ENCODE measurements at regions of chr6 and their contacts with region 1.

Region 1: GRCh38 chr6:26031595-26032339 is 55.5 kb upstream of the HFE start:
- DNase-seq: peak; percentile 84
- ATAC-seq: peak; percentile 66
- H3K4me3 Mint-ChIP-seq: peak overlapping the region; percentile 88
- H3K27ac Mint-ChIP-seq: peak overlapping the region; percentile 98
- H3K4me1 Mint-ChIP-seq: peaks cover 66% of the 10 kb centered on the region
- H3K27me3 Mint-ChIP-seq: peaks cover 3% of the 10 kb centered on the region

Region 2: DNA sequence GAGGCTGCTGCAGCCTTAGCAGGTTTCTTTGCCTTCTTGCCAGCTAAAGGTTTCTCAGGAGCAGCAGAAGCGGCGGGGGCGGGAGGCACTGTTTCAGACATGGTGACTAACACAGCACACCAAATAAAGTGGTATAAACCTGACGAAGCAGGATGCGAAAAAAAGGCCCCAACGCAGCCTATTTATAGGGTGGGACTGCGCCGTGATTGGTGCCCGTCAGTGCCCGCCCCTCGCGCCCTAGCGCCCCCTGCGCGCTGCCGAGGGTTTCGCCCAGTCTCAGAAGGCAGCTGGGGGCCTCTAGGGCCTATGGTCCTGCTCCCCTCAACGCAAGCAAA is 14.2 kb before region 1 on chr6:
- POLR2A ChIA-PET with region 1: interaction called, 1,993 read pairs
- DNase-seq: peak; percentile 84
- ATAC-seq: peak; percentile 24
- H3K4me3 Mint-ChIP-seq: peak overlapping the region; percentile 77
- H3K27ac Mint-ChIP-seq: peak overlapping the region; percentile 92
- H3K4me1 Mint-ChIP-seq: peaks cover 26% of the 10 kb centered on the region
- H3K27me3 Mint-ChIP-seq: no peaks in the 10 kb centered on the region

Region 3: DNA sequence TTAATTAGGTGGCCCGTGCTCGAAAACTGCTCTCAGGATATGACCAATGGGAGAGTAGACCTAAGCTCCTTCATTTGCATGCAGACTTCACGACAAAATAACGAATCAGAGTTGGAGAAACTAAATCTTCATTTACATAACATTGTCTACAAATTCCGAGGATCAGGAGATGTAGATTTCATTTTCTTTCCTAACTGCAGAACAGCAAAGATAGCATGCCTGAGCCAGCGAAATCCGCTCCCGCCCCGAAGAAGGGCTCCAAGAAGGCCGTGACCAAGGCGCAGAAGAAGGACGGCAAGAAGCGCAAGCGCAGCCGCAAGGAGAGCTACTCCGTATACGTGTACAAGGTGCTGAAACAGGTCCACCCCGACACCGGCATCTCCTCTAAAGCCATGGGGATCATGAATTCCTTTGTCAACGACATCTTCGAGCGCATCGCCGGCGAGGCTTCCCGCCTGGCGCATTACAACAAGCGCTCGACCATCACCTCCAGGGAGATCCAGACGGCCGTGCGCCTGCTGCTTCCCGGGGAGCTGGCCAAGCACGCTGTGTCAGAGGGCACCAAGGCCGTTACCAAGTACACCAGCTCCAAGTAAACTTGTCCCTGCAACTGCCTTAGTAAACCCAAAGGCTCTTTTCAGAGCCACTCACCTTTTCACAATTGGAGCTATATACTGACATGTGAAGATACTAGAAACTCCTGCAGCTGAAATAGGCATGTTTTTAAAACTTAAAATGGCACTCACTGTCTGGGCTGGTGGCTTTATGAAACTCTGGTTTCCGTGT is 152.0 kb after region 1 on chr6:
- POLR2A ChIA-PET with region 1: interaction called, 25 read pairs
- DNase-seq: peak; percentile 78
- ATAC-seq: peak; percentile 85
- H3K4me3 Mint-ChIP-seq: peak overlapping the region; percentile 96
- H3K27ac Mint-ChIP-seq: peak overlapping the region; percentile 99
- H3K4me1 Mint-ChIP-seq: peaks cover 48% of the 10 kb centered on the region
- H3K27me3 Mint-ChIP-seq: no peaks in the 10 kb centered on the region

Region 4: DNA sequence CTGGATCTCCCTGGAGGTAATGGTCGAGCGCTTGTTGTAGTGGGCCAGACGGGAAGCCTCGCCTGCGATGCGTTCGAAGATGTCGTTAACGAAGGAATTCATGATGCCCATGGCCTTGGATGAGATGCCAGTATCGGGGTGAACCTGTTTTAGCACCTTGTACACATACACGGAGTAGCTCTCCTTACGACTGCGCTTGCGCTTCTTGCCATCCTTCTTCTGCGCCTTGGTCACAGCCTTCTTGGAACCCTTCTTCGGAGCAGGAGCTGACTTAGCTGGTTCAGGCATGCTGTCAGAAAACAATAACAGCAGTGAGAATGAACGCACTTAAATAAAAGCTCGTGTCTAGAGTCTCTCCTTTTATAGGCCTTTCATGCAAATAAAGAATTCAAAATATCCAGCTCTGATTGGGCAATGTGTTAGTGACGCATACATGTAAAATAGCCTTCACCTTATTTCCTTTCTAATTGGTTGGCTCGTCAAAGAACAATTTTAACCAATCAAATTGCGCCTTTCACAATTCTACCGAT is 184.7 kb after region 1 on chr6:
- POLR2A ChIA-PET with region 1: interaction called, 41 read pairs
- DNase-seq: peak; percentile 77
- ATAC-seq: peak; percentile 75
- H3K4me3 Mint-ChIP-seq: no peak overlapping the region
- H3K27ac Mint-ChIP-seq: no peak overlapping the region
- H3K4me1 Mint-ChIP-seq: peaks cover 32% of the 10 kb centered on the region
- H3K27me3 Mint-ChIP-seq: no peaks in the 10 kb centered on the region

Region 5: GRCh38 chr6:27132532-27133280 is 1100.9 kb after region 1 on chr6:
- POLR2A ChIA-PET with region 1: interaction called, 22 read pairs
- DNase-seq: peak; percentile 90
- ATAC-seq: peak; percentile 76
- H3K4me3 Mint-ChIP-seq: no peak overlapping the region
- H3K27ac Mint-ChIP-seq: no peak overlapping the region
- H3K4me1 Mint-ChIP-seq: peaks cover 46% of the 10 kb centered on the region
- H3K27me3 Mint-ChIP-seq: no peaks in the 10 kb centered on the region

Region 6: DNA sequence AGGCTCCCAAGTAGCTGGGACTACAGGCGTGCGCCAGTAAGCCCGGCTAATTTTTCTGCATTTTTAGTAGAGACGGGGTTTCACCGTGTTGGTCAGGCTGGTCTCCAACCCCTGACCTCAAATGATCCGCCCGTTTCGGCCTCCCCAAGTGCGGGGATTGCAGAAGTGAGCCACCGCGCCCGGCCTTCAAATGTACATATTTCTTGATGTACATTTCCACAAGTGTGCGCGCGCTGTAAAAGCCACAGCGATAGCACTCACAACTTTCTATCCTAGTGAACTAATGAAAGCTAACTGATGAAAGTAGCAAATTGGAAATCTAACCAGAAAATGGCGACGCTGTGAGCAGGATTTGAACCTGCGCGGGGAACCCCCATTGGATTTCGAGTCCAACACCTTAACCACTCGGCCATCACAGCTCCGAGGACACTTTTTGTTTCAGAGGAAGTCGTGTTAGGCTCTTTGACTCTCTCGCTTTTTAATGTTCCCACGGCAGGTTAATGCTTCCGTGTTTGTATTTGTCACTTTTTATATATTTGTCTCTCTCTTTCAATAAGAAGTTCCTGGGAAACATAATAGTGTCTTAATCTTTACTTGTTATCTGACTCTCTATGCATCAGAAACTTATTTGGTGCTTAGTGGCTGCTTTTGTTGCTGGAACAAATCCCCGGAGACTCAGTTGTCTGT is 1640.5 kb after region 1 on chr6:
- POLR2A ChIA-PET with region 1: no interaction called
- DNase-seq: no peak
- ATAC-seq: peak; percentile 66
- H3K4me3 Mint-ChIP-seq: peak overlapping the region; percentile 66
- H3K27ac Mint-ChIP-seq: no peak overlapping the region
- H3K4me1 Mint-ChIP-seq: peaks cover 40% of the 10 kb centered on the region
- H3K27me3 Mint-ChIP-seq: peaks cover 73% of the 10 kb centered on the region

Region 7: DNA sequence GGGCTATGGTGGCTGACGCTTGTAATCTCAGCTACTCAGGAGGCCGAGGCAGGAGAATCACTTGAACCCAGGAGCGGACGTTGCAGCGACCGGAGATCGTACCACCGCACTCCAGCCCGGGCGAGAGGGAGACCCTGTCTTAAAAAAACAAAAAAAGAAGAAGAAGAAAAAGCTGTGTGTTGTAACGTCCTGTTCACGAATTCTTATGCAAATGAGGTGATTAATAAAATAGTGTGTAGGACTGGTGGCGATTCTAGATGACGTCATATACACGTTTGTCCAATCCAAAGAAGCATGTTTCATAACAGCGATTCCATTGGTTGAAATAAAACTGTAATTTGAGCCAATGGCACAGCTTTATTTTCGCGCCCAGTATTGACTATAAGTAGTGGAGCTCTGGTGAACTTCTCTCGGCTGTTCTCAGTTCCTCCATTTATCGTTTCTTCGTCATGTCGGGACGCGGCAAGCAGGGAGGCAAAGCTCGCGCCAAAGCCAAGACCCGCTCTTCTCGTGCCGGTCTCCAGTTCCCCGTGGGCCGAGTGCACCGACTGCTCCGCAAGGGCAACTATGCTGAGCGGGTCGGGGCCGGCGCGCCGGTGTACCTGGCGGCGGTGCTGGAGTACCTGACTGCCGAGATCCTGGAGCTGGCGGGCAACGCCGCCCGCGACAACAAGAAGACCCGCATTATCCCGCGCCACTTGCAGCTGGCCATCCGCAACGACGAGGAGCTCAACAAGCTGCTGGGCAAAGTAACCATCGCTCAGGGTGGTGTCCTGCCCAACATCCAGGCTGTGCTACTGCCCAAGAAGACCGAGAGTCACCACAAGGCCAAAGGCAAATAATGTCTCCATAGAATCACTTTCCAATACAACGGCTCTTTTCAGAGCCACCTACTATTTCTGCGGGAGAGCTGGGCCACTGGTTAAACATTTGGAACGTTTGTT is 1833.4 kb after region 1 on chr6:
- POLR2A ChIA-PET with region 1: interaction called, 113 read pairs
- DNase-seq: peak; percentile 83
- ATAC-seq: peak; percentile 56
- H3K4me3 Mint-ChIP-seq: peak overlapping the region; percentile 99
- H3K27ac Mint-ChIP-seq: peak overlapping the region; percentile 100
- H3K4me1 Mint-ChIP-seq: peaks cover 57% of the 10 kb centered on the region
- H3K27me3 Mint-ChIP-seq: no peaks in the 10 kb centered on the region

Measured in activated naive CD8-positive, alpha-beta T cell treated with anti-CD3 and anti-CD28 coated beads, Interleukin-2, amount 10 ng/mL, durations not matched to agents 7 days and 5 days (primary cell).